ENCODE measurements at regions of chr3 and their contacts with region 1.

Region 1: GRCh38 chr3:47522082-47522987 is 8.8 kb upstream of the ELP6 start:
- DNase-seq: peak; percentile 83
- ATAC-seq: peak; percentile 95
- H3K4me3 ChIP-seq: no peak overlapping the region
- H3K4me3 Mint-ChIP-seq: no peak overlapping the region
- H3K27ac ChIP-seq: no peak overlapping the region
- H3K27ac Mint-ChIP-seq: no peak overlapping the region
- H3K4me1 ChIP-seq: peaks cover 3 to 4% of the 10 kb centered on the region in 2 donors
- H3K4me1 Mint-ChIP-seq: peaks cover 9% of the 10 kb centered on the region
- H3K27me3 ChIP-seq: no peaks in the 10 kb centered on the region
- H3K27me3 Mint-ChIP-seq: no peaks in the 10 kb centered on the region
- CTCF ChIP-seq: peak; percentile 92

Region 2: DNA sequence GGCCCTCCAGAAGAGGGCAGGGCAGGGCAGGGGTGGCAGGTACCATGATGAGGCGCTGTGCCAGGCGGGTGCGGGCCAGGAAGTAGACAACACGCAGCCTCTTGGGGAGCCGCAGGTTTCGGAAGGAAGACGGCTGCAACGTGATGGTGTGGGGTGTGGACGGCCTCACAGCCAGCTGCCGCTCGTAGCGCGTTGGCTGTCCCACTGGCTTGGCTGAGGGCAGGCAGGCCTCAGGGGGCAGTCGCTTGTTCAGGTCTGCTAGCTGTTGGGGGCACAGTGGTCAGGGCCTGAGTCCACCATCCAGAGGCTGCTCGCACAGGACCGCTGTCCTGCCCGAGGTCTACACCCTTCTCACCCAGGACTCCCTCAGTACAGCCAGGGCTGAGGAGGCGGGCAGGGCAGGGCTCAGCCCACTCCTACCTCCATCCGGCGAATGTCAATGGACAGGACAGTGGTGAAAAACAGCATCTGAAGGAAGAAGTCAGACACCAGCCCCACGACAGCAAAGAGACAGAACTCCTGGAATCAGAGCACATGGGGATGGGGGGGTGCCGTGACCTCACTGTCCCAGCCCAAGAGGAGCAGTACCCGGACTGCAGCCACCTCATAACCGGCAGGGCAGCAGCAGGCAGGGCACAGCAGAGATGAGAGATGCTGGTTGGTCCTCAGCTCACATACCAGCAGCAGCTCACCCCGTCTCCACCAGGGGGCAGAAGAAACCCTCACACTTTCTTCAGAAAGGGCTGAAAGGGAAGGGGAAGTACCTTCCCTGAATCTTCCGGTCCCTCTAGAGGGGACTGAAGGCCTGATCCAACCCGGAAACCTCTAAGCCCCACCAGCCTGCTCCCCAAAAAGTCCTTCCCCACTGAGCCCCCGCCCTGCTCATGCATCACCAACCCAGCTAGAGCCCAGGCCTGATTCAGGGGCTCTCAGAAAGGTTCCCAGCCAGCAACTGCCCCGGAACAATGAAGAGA is 101.5 kb before region 1 on chr3:
- CTCF ChIA-PET with region 1: interaction called, 17 read pairs
- POLR2A ChIA-PET with region 1: no interaction called
- intact Hi-C with region 1: no loop called
- DNase-seq: peak; percentile 92
- ATAC-seq: peak; percentile 98
- H3K4me3 ChIP-seq: peak overlapping the region in 2 of 5 experiments; percentile 8 to 9
- H3K4me3 Mint-ChIP-seq: peak overlapping the region; percentile 76
- H3K27ac ChIP-seq: peak overlapping the region; percentile 77 to 87
- H3K27ac Mint-ChIP-seq: peak overlapping the region; percentile 99
- H3K4me1 ChIP-seq: peaks cover 11 to 12% of the 10 kb centered on the region in 2 donors
- H3K4me1 Mint-ChIP-seq: peaks cover 14% of the 10 kb centered on the region
- H3K27me3 ChIP-seq: no peaks in the 10 kb centered on the region
- H3K27me3 Mint-ChIP-seq: no peaks in the 10 kb centered on the region
- CTCF ChIP-seq: peak; percentile 89

Region 3: GRCh38 chr3:47791193-47791855 is 269.0 kb after region 1 on chr3:
- CTCF ChIA-PET with region 1: interaction called, 93 read pairs
- POLR2A ChIA-PET with region 1: interaction called, 11 read pairs
- intact Hi-C with region 1: no loop called
- DNase-seq: no peak
- ATAC-seq: no peak
- H3K4me3 ChIP-seq: no peak overlapping the region
- H3K4me3 Mint-ChIP-seq: no peak overlapping the region
- H3K27ac ChIP-seq: no peak overlapping the region
- H3K27ac Mint-ChIP-seq: peak overlapping the region; percentile 4
- H3K4me1 ChIP-seq: no peaks in the 10 kb centered on the region
- H3K4me1 Mint-ChIP-seq: peaks cover 1% of the 10 kb centered on the region
- H3K27me3 ChIP-seq: no peaks in the 10 kb centered on the region
- H3K27me3 Mint-ChIP-seq: no peaks in the 10 kb centered on the region
- CTCF ChIP-seq: no peak

Region 4: DNA sequence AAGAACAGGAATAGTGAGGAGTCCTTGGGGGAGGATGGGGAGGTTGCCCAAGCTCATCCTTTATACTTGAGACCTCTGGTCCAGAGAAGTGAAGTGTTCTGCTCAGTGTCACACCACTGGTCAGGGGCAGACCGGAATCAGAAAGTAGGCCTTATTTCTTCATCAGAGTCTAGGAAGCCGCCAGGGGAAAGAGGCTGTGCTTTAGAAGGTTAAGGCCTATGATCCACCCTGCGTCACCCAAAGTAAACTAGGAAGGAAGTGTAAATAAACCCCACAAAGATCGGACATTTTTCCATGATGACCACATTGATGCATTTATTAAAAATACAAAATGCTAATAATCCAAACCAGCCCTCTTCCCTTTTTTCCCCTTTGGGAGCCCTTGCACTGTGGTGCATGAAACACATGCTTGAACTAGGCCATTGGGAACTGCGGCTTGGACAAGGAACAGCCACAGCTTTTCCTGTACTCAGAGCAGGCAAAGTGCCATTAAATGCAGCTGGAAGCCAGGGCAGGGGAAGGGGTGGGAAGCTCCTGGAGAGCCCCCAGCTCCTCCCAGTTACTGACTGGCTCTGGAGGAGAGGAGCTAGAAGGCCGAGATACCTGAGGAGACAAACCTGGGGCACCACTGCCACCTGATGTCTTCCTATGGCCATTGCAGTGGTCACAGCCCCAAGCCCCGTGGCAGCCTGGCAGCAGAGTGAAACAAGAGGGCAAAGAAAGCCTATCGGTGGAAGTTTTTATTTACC is 628.9 kb after region 1 on chr3:
- CTCF ChIA-PET with region 1: interaction called, 12 read pairs
- POLR2A ChIA-PET with region 1: no interaction called
- intact Hi-C with region 1: no loop called
- DNase-seq: peak; percentile 67
- ATAC-seq: peak; percentile 81
- H3K4me3 ChIP-seq: no peak overlapping the region
- H3K4me3 Mint-ChIP-seq: no peak overlapping the region
- H3K27ac ChIP-seq: no peak overlapping the region
- H3K27ac Mint-ChIP-seq: no peak overlapping the region
- H3K4me1 ChIP-seq: no peaks in the 10 kb centered on the region
- H3K4me1 Mint-ChIP-seq: no peaks in the 10 kb centered on the region
- H3K27me3 ChIP-seq: no peaks in the 10 kb centered on the region
- H3K27me3 Mint-ChIP-seq: no peaks in the 10 kb centered on the region
- CTCF ChIP-seq: peak; percentile 70

Measured in B cell (primary cell).